Cardiac septum (tissue), 1 donor: ENCODE measurements at regions of chr10 and their contacts with region 1.

Region 1: DNA sequence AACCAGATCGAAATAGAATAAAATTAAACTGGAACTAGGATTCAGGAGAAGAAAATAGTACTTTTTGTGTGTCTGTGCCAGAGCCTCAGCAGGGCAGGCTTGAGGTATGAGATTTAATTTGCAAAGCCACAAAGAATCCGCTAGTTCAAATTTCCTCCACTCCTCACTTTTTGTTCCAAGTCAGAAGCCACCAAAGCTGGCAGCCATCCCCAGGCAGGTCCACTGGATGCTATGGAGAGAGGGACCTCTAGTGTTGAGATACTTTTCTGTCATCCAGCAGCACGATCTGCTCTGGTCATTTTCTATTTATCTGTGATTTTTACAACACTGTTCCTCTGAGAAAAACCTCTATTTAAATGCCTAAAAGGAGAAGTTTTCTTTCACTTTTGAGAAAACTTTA is 147.9 kb upstream of the FRMD4A start:
- DNase-seq: no peak

Region 2: GRCh38 chr10:14191871-14192270 is 286.7 kb before region 1 on chr10:
- intact Hi-C with region 1: loop called (anchors 2 kb)
- DNase-seq: no peak

Region 3: DNA sequence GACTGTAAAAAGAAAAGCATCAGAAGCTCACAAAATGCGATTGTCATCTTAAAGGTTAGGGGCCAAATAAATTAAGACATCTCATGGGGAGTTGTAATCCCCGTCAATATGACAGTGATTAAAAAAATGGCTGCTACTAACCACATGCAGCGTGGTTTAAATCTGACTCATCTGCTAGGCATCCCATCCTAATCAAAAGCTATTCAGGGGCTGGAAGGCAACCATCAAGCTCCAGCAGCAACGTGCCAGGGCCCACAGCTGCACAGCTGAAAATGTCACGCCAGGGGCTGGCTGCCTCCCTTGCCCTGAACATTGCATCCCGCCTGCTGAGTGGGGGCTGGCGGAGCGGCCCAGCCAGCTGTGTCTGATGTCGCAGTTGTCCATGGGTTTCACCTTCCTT is 81.5 kb before region 1 on chr10:
- intact Hi-C with region 1: loop called (anchors 10 kb)
- DNase-seq: peak; percentile 85

Region 4: DNA sequence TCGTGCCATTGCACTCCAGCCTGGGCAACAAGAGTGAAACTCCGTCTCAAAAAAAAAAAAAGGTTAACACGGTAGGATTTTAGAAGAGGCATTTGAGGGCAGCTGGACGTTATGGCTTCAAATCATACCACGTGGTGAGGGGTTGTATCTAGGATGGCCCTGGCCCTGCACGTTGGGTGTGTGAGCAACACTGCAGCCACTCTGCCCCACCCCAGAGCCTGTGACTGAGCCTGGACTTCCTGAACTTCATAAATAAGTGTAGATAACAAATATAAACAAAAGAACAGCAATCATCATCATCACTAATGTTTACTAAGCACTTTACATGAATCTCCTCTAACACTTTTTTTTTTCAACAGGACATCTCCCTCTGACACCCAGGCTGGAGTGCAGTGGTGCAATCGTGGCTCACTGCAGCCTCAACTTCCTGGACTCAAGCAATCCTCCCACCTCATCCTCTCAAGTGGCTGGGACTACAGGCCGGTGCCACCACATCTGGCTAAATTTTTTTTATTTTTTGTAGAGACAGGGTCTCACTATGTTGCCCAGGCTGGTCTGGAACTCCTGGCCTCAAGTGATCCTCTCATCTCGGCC is 21.7 kb after region 1 on chr10:
- intact Hi-C with region 1: no loop called
- DNase-seq: no peak